Heart right ventricle (tissue), 16 donors: ENCODE measurements at regions of chr19 and their contacts with region 1.

Region 1: GRCh38 chr19:47540728-47541127 is 25.9 kb upstream of the NAPA start:
- DNase-seq: no peak
- ATAC-seq: no peak
- H3K4me3 ChIP-seq: no peak overlapping the region
- H3K27ac ChIP-seq: peak overlapping the region in 1 of 10 donors; percentile 78
- H3K4me1 ChIP-seq: peaks cover 0 to 20% (median 6%) of the 10 kb centered on the region in 9 donors
- H3K27me3 ChIP-seq: peaks cover 9 to 29% (median 15%) of the 10 kb centered on the region in 7 donors
- CTCF ChIP-seq: peak in 4 of 9 donors; percentile 8 to 22 (median 14)

Region 2: GRCh38 chr19:47600246-47601179 is 59.8 kb after region 1 on chr19:
- intact Hi-C with region 1: loop called in 1 of 10 experiments (anchors 10 kb)
- DNase-seq: peak; percentile 99 to 100
- ATAC-seq: peak; percentile 98 to 100 (median 98)
- H3K4me3 ChIP-seq: peak overlapping the region; percentile 16 to 73 (median 64)
- H3K27ac ChIP-seq: peak overlapping the region; percentile 44 to 92 (median 86)
- H3K4me1 ChIP-seq: peaks cover 2 to 46% (median 22%) of the 10 kb centered on the region in 9 donors
- H3K27me3 ChIP-seq: no peaks in the 10 kb centered on the region
- CTCF ChIP-seq: peak in 1 of 9 donors; percentile 13